ENCODE measurements at regions of chr7 and their contacts with region 1.

Region 1: GRCh38 chr7:140018125-140019043 is 44.4 kb downstream of the PARP12 start:
- DNase-seq: no peak
- H3K4me3 Mint-ChIP-seq: no peak overlapping the region
- H3K27ac Mint-ChIP-seq: no peak overlapping the region
- H3K4me1 Mint-ChIP-seq: no peaks in the 10 kb centered on the region
- H3K27me3 Mint-ChIP-seq: no peaks in the 10 kb centered on the region
- CTCF ChIP-seq: no peak

Region 2: GRCh38 chr7:139739863-139740597 is 278.4 kb before region 1 on chr7:
- CTCF ChIA-PET with region 1: no interaction called
- intact Hi-C with region 1: no loop called
- DNase-seq: no peak
- H3K4me3 Mint-ChIP-seq: no peak overlapping the region
- H3K27ac Mint-ChIP-seq: no peak overlapping the region
- H3K4me1 Mint-ChIP-seq: peaks cover 55% of the 10 kb centered on the region
- H3K27me3 Mint-ChIP-seq: no peaks in the 10 kb centered on the region
- CTCF ChIP-seq: no peak

Region 3: DNA sequence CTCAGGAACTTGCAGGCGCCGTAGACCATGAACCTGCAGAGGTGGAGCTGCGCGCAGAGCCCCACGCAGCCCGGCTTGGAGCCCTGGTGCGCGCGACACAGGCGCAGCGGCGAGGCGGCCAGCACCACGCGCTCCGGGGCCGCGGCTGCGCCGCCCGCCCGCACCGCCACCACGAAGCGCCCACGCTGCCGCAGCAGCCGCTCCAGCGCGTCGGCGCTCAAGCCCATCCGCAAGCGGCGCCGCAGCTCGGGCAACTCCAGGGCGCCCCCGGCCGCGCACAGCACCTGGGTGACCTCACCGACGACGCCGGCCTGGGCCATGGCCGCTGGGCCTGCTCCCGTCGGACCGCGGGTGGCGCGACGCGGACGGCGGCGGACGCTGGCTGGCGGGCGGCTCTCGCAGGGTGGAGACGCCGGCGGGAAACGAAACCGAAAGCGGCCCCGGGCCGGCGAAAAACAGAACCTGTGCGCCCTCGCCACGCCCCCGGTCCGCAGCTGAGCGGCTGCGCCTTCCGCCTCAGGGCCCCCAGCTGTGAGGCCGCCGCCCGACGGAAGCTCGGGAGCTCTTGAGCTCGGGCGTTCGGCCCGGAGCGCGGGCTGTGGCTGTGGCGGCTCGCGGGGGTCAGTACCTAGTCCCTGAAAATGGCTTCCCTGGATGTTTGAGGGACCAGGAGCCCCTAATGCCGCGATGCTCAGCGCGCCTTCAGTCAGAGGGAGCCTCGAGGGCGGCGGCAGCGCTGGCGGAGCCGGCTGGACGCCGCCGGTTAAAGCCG is 44.3 kb after region 1 on chr7 and contains the start of gene PARP12:
- CTCF ChIA-PET with region 1: no interaction called
- intact Hi-C with region 1: no loop called
- DNase-seq: peak; percentile 92
- H3K4me3 Mint-ChIP-seq: peak within 1 kb of the TSS; percentile 55
- H3K27ac Mint-ChIP-seq: peak within 1 kb of the TSS; percentile 55
- H3K4me1 Mint-ChIP-seq: peaks cover 37% of the 10 kb centered on the region
- H3K27me3 Mint-ChIP-seq: no peaks in the 10 kb centered on the region
- CTCF ChIP-seq: no peak
- total RNA-seq, gene PARP12: 66.6 and 102 TPM in 2 replicates

Region 4: GRCh38 chr7:140260352-140261104 is 242.1 kb after region 1 on chr7:
- CTCF ChIA-PET with region 1: interaction called, 12 read pairs
- intact Hi-C with region 1: no loop called
- DNase-seq: no peak
- H3K4me3 Mint-ChIP-seq: no peak overlapping the region
- H3K27ac Mint-ChIP-seq: no peak overlapping the region
- H3K4me1 Mint-ChIP-seq: no peaks in the 10 kb centered on the region
- H3K27me3 Mint-ChIP-seq: peaks cover 24% of the 10 kb centered on the region
- CTCF ChIP-seq: no peak